ENCODE measurements at regions of chr3 and their contacts with region 1.

Region 1: DNA sequence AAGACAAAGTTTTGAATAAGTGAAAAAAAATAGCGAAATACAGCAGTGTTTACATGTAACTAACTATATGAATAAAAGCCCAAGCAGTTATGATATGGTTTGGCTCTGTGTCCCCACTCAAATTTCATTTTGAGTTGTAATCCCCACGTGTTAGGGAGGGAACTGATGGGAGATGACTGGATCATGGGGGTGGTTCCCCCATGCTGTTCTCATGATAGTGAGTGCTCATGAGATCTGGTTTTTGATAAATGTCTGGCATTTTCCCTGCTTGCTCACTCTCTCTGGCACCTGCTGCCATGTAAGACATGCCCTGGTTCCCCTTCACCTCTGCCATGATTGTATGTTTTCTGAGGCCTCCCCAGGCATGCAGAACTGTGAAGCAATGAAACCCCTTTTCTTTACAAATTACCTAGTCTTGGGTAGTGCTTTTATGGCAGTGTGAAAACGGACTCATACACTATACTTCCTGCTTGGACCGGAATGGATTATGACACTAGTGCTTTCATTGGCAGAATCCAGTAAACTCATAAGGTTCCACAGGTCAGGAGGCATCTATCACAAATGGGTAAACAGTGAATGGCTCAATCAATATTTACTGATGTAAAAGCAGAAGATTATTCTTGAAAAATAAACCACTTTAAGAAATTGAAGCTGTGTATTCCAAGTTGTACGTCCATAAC is 192.1 kb downstream of the CBLB start:
- DNase-seq: no peak
- H3K4me3 Mint-ChIP-seq: peak overlapping the region; percentile 1
- H3K27ac Mint-ChIP-seq: peak overlapping the region; percentile 85
- H3K4me1 Mint-ChIP-seq: peaks cover 36% of the 10 kb centered on the region
- H3K27me3 Mint-ChIP-seq: no peaks in the 10 kb centered on the region

Region 2: GRCh38 chr3:105108823-105109222 is 567.9 kb before region 1 on chr3:
- intact Hi-C with region 1: no loop called
- DNase-seq: no peak
- H3K4me3 Mint-ChIP-seq: no peak overlapping the region
- H3K27ac Mint-ChIP-seq: no peak overlapping the region
- H3K4me1 Mint-ChIP-seq: no peaks in the 10 kb centered on the region
- H3K27me3 Mint-ChIP-seq: no peaks in the 10 kb centered on the region

Region 3: DNA sequence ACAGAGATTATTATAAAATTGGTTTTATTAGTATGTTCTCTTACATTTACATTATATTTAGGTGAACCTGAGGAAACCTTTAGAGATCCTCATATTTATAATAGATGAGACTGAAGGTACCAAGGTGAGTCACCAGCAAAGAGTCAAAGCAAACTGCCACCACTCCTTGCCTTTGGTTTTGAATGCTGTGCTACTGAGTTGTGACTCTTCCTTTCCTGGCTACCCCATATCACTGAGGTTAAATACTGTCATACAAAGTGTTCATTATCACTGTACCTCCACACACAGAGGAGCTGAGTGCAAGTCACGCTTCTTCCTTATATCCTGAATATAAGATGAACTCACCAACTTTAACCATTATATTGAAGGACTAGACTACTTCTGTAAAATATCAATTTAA is 23.8 kb after region 1 on chr3:
- intact Hi-C with region 1: loop called (anchors 1 kb)
- DNase-seq: no peak
- H3K4me3 Mint-ChIP-seq: no peak overlapping the region
- H3K27ac Mint-ChIP-seq: peak overlapping the region; percentile 61
- H3K4me1 Mint-ChIP-seq: peaks cover 38% of the 10 kb centered on the region
- H3K27me3 Mint-ChIP-seq: no peaks in the 10 kb centered on the region

Region 4: GRCh38 chr3:105752744-105753415 is 76.1 kb after region 1 on chr3:
- intact Hi-C with region 1: loop called (anchors 2 kb)
- DNase-seq: peak; percentile 24
- H3K4me3 Mint-ChIP-seq: peak overlapping the region; percentile 57
- H3K27ac Mint-ChIP-seq: peak overlapping the region; percentile 98
- H3K4me1 Mint-ChIP-seq: peaks cover 88% of the 10 kb centered on the region
- H3K27me3 Mint-ChIP-seq: no peaks in the 10 kb centered on the region

Region 5: DNA sequence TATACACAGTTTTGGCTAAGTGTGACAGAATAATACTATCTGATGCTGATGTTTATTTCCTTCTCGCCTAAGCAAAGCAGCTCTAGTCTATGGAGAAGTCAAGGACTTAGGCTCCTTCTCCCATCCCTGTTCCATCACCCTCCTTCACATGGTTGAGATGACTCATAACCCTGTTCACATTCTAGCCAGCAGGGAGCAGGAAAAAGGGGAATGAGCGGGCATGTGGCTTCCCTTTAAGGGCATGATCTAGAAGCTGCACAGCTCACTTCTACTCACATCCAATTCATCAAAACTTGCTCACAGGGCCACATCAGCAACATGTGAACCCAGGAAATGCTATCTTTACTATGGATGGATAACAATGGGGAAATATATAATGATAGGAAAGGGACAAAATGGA is 151.2 kb after region 1 on chr3:
- intact Hi-C with region 1: loop called (anchors 1 kb)
- DNase-seq: no peak
- H3K4me3 Mint-ChIP-seq: peak overlapping the region; percentile 57
- H3K27ac Mint-ChIP-seq: peak overlapping the region; percentile 96
- H3K4me1 Mint-ChIP-seq: peaks cover 88% of the 10 kb centered on the region
- H3K27me3 Mint-ChIP-seq: no peaks in the 10 kb centered on the region

Region 6: GRCh38 chr3:106013971-106014370 is 337.2 kb after region 1 on chr3:
- intact Hi-C with region 1: loop called (anchors 2 kb)
- DNase-seq: no peak
- H3K4me3 Mint-ChIP-seq: no peak overlapping the region
- H3K27ac Mint-ChIP-seq: peak overlapping the region; percentile 5
- H3K4me1 Mint-ChIP-seq: peaks cover 65% of the 10 kb centered on the region
- H3K27me3 Mint-ChIP-seq: no peaks in the 10 kb centered on the region

Region 7: GRCh38 chr3:106423321-106424225 is 746.8 kb after region 1 on chr3:
- intact Hi-C with region 1: loop called (anchors 1 kb)
- DNase-seq: no peak
- H3K4me3 Mint-ChIP-seq: peak overlapping the region; percentile 45
- H3K27ac Mint-ChIP-seq: peak overlapping the region; percentile 90
- H3K4me1 Mint-ChIP-seq: peaks cover 50% of the 10 kb centered on the region
- H3K27me3 Mint-ChIP-seq: no peaks in the 10 kb centered on the region

Region 8: DNA sequence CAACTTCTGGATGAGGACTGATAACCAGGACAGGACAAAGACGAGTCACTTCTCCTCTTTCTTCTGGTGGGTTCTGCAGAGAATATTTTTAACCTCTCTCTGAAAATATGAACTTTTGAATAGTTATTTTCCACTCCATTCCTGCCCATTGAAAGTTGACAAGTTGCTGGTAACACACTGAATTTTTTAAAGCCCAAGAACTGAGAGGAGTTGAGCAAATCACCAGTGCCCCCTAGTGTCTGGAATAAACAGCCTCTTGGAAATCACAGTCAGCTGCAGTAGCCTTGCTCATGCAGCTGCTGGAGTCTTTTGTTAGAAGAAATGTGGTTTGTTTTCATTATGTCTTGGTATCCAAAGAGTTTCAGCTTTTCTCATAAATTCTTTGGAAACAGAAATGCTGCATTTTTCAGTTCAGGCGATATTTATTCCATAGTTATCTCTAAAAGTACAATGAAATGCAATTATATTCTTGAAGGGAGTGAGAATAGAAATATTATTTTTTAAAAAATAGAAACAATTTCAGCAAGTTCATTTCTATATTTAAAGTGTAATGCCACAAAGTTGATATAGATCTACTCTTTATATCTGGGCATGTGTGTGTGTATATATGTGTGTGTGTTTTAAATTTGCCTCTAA is 933.0 kb after region 1 on chr3:
- intact Hi-C with region 1: loop called (anchors 2 kb)
- DNase-seq: peak; percentile 50
- H3K4me3 Mint-ChIP-seq: no peak overlapping the region
- H3K27ac Mint-ChIP-seq: peak overlapping the region; percentile 66
- H3K4me1 Mint-ChIP-seq: peaks cover 30% of the 10 kb centered on the region
- H3K27me3 Mint-ChIP-seq: no peaks in the 10 kb centered on the region

Measured in activated T-helper 1 cell treated with anti-CD3 and anti-CD28 coated beads, Interleukin-12 subunit alpha, Interleukin-12 subunit beta, Interleukin-2, Interleukin-4 antibody, amounts not matched to agents 30 ng/mL and 10 ng/mL and 1 ng/mL, durations not matched to agents 14 hours and 24 hours and 36 hours (primary cell).